GM10248 (cell line): ENCODE measurements at regions of chr2 and their contacts with region 1.

Region 1: GRCh38 chr2:70043252-70043875 is 43.9 kb upstream of the PCBP1 start:
- DNase-seq: no peak
- CTCF ChIP-seq: no peak

Region 2: DNA sequence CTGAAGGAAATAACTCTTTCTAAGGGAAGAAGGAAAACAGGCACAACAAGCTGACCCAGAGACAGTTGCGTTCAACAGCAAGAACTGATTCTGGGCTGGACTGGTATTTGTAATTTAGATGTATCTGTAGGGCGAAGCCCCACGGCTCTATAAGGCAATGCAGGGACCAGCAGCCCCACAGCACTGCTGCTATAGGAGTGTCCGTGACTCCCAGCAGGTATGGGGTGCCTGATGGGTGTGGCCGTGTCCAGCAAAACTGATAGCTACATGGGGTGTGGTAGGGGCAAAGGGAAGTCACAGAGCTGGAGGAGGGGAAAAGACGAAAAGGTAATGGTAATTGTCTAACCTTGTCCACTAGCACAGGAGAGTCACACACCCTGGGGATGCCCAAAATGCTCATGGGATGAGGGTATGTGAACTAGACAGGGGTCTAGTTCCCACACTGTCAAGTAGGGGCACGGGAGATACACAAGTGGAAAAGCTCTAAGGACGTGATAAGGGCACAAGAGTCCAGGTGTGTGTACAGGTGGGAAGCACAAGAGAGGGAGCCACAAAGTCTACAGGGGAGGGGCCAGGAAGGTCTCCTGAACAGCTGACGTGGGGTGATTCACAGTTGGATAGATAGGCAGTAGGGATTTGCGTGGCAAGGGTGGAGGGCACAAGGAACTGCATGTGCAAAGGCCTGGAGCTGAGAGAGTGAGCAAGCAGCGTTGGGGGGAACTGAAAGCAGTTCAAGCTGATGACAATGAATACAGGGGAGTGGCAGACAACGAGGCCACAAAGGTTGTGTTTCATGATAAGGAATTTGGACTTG is 33.4 kb before region 1 on chr2:
- CTCF ChIA-PET with region 1: interaction called, 13 read pairs
- POLR2A ChIA-PET with region 1: no interaction called
- DNase-seq: no peak
- CTCF ChIP-seq: no peak